ENCODE measurements at regions of chr3 and their contacts with region 1.

Region 1: GRCh38 chr3:195850857-195851543 is 39.3 kb upstream of the MUC4 start:
- DNase-seq: peak; percentile 93
- H3K4me3 ChIP-seq: no peak overlapping the region
- H3K27ac ChIP-seq: no peak overlapping the region
- H3K4me1 ChIP-seq: no peaks in the 10 kb centered on the region
- H3K27me3 ChIP-seq: no peaks in the 10 kb centered on the region
- CTCF ChIP-seq: peak; percentile 100

Region 2: DNA sequence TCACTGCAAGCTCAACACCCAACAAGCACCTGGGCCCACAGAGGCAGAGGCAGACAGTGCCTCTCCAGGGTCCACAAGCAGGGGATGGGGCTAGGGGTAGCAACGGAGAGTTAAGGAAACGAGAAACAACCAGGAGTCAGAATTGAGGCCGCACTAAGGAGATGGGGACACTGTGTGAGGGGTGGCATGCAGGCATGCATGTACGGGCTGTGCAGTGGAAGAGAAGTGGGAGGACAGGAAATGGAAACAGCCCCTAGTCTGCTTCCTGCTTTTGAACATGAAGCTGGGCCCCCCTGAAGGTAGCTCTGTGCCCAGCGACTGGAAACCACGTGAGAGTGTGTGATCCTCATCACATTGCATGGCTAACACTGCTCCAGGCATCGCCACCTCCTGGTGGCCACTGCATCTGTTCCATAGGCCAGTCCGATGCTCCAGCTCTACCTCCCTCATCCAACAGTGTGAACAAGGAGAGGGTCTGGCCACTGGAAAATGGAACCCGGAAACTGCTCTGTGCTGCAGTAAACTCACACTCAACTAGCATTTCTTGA is 624.0 kb before region 1 on chr3:
- CTCF ChIA-PET with region 1: no interaction called
- POLR2A ChIA-PET with region 1: no interaction called
- intact Hi-C with region 1: no loop called
- DNase-seq: peak; percentile 57
- H3K4me3 ChIP-seq: no peak overlapping the region
- H3K27ac ChIP-seq: peak overlapping the region; percentile 14
- H3K4me1 ChIP-seq: peaks cover 21% of the 10 kb centered on the region
- H3K27me3 ChIP-seq: no peaks in the 10 kb centered on the region
- CTCF ChIP-seq: peak; percentile 67

Region 3: GRCh38 chr3:195558602-195559001 is 292.4 kb before region 1 on chr3:
- CTCF ChIA-PET with region 1: no interaction called
- POLR2A ChIA-PET with region 1: no interaction called
- intact Hi-C with region 1: loop called (anchors 5 kb)
- DNase-seq: peak; percentile 58
- H3K4me3 ChIP-seq: no peak overlapping the region
- H3K27ac ChIP-seq: no peak overlapping the region
- H3K4me1 ChIP-seq: no peaks in the 10 kb centered on the region
- H3K27me3 ChIP-seq: no peaks in the 10 kb centered on the region
- CTCF ChIP-seq: peak; percentile 60

Measured in A673 (cell line).